ENCODE measurements at regions of chr7 and their contacts with region 1.

Region 1: GRCh38 chr7:107501593-107501992 is 31.7 kb downstream of the GPR22 start:
- DNase-seq: peak; percentile 47 to 76 (median 62)
- ATAC-seq: peak; percentile 92
- H3K4me3 ChIP-seq: no peak overlapping the region
- H3K27ac ChIP-seq: no peak overlapping the region
- H3K4me1 ChIP-seq: peaks cover 2 to 3% of the 10 kb centered on the region in 2 experiments; a peak in 2 of 5 replicates
- H3K27me3 ChIP-seq: no peaks in the 10 kb centered on the region
- CTCF ChIP-seq: peak; percentile 63 to 96 (median 84); a peak in 5 of 6 replicates
- EP300 ChIP-seq: no peak
- POLR2A ChIP-seq: no peak
- RAD21 ChIP-seq: peak; percentile 89 to 92

Region 2: DNA sequence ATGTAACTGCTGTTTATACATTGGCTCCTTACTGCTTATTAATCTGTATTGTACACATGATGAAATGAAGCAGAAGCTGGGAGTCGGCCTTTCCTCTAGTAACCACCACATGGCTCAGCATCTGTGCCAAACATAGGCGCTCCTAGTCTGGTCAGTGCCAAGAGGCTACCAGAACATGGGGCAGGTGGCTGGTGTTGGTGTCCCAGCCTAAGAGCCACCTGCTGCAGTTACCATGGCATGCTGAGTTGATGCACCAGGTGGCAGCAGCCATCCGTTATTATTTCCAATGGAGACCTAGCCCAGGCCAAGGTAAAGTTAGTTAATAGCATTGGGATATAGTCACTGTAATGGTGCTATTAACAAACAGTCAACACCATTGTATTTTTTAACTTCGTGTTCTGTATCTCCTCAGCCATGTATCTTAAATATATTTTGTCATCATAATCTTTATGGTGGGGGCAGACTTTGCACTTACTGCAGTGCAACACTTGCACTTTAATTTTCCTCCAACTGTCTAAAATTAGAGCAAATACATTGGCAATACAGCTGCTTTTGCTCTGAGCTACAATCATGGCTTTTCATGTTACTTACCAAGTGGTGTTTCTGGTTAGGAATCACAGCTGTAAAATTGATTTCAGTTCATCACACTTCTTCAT is 299.7 kb before region 1 on chr7:
- CTCF ChIA-PET with region 1: interaction called, 12 read pairs
- POLR2A ChIA-PET with region 1: no interaction called
- in situ Hi-C with region 1: no loop called
- intact Hi-C with region 1: loop called (anchors 1 kb)
- DNase-seq: peak; percentile 59 to 68 (median 64)
- ATAC-seq: peak; percentile 90
- H3K4me3 ChIP-seq: no peak overlapping the region
- H3K27ac ChIP-seq: no peak overlapping the region
- H3K4me1 ChIP-seq: peaks cover 0 to 5% of the 10 kb centered on the region in 2 experiments; a peak in 1 of 5 replicates
- H3K27me3 ChIP-seq: no peaks in the 10 kb centered on the region
- CTCF ChIP-seq: peak; percentile 77 to 84 (median 80)
- EP300 ChIP-seq: no peak
- POLR2A ChIP-seq: no peak
- RAD21 ChIP-seq: peak; percentile 73 to 80

Region 3: GRCh38 chr7:107318523-107319160 is 183.0 kb before region 1 on chr7:
- CTCF ChIA-PET with region 1: no interaction called
- POLR2A ChIA-PET with region 1: no interaction called
- in situ Hi-C with region 1: no loop called
- intact Hi-C with region 1: loop called (anchors 5 kb)
- DNase-seq: peak; percentile 66 to 92 (median 75)
- ATAC-seq: peak; percentile 97
- H3K4me3 ChIP-seq: no peak overlapping the region
- H3K27ac ChIP-seq: peak overlapping the region; percentile 62
- H3K4me1 ChIP-seq: peaks cover 13 to 30% of the 10 kb centered on the region in 2 experiments
- H3K27me3 ChIP-seq: no peaks in the 10 kb centered on the region
- CTCF ChIP-seq: no peak
- EP300 ChIP-seq: peak; percentile 89
- POLR2A ChIP-seq: 0 out of 2 replicates have a peak, but pooled peaks have one; percentile 29
- RAD21 ChIP-seq: no peak

Region 4: GRCh38 chr7:107387128-107387527 is 114.5 kb before region 1 on chr7:
- CTCF ChIA-PET with region 1: no interaction called
- POLR2A ChIA-PET with region 1: no interaction called
- in situ Hi-C with region 1: no loop called
- intact Hi-C with region 1: loop called (anchors 5 kb)
- DNase-seq: peak in 2 of 4 experiments; percentile 41 to 67
- ATAC-seq: peak; percentile 92
- H3K4me3 ChIP-seq: no peak overlapping the region
- H3K27ac ChIP-seq: peak overlapping the region; percentile 59; the same call in 1 of the 3 replicates
- H3K4me1 ChIP-seq: peaks cover 5 to 17% of the 10 kb centered on the region in 2 experiments
- H3K27me3 ChIP-seq: no peaks in the 10 kb centered on the region
- CTCF ChIP-seq: 0 out of 6 replicates have a peak, but pooled peaks of 1 of the 3 experiments have one; percentile 23
- EP300 ChIP-seq: no peak
- POLR2A ChIP-seq: no peak
- RAD21 ChIP-seq: no peak

Region 5: DNA sequence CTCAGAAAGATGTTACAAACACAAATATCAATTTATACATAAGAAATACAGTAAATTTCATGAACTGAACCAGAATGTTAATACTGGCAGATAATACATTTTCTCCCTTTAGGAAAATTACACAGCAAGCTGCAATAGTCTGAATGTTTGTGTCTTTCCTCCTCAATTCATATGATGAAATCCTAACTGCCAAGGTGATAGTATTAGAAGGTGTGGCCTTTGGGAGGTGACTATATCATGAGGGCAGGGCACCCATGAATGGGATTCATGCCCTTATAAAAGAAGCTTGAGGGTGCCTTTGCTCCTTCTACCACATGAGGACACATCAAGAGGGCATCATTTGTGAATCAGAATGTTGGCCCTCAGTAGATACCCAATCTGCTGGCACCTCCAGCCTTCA is 96.0 kb before region 1 on chr7:
- CTCF ChIA-PET with region 1: no interaction called
- POLR2A ChIA-PET with region 1: no interaction called
- in situ Hi-C with region 1: no loop called
- intact Hi-C with region 1: no loop called
- DNase-seq: no peak
- ATAC-seq: peak; percentile 50
- H3K4me3 ChIP-seq: no peak overlapping the region
- H3K27ac ChIP-seq: peak overlapping the region; percentile 13; the same call in 1 of the 3 replicates
- H3K4me1 ChIP-seq: no peaks in the 10 kb centered on the region
- H3K27me3 ChIP-seq: no peaks in the 10 kb centered on the region
- CTCF ChIP-seq: no peak
- EP300 ChIP-seq: no peak
- POLR2A ChIP-seq: no peak
- RAD21 ChIP-seq: no peak

Region 6: DNA sequence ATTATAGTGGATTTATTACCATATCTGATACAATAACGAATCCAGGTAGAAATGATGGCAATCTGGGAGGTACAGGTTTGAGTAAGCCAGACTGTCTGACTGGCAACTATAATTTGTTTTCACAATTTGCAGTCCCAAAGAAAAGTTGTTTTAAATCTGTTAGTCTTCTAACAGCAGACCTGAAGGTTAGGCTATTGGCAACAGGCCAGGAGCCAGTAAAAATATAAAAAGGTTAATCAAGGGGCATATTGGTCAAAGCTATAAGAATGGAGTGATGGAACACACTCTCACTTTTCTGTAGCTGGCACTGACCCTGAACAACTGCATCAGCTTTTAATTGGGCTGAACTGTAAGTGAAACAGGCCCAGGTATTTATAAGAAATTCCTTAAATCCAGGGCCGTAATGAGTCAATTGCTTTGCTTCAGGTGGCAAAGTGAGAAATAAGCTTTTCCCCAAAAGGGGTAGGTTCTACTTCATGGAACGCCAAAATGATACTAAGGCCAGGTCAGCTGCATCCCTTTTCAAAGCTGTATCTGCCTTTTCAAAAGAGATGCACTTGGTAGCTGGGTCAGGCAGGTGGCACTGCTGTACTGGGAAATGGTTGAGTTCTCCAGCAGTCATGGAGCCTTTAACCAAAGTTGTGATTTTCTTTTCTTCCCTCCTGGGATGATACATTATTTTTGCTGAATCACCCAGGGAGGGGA is 38.7 kb before region 1 on chr7:
- CTCF ChIA-PET with region 1: interaction called, 4 read pairs
- POLR2A ChIA-PET with region 1: interaction called, 6 read pairs
- in situ Hi-C with region 1: no loop called
- intact Hi-C with region 1: loop called (anchors 1 kb)
- DNase-seq: peak; percentile 20 to 77 (median 38)
- ATAC-seq: peak; percentile 92
- H3K4me3 ChIP-seq: no peak overlapping the region
- H3K27ac ChIP-seq: no peak overlapping the region
- H3K4me1 ChIP-seq: no peaks in the 10 kb centered on the region
- H3K27me3 ChIP-seq: no peaks in the 10 kb centered on the region
- CTCF ChIP-seq: peak; percentile 77 to 97 (median 82)
- EP300 ChIP-seq: 0 out of 2 replicates have a peak, but pooled peaks have one; percentile 24
- POLR2A ChIP-seq: no peak
- RAD21 ChIP-seq: peak; percentile 94 to 97

Region 7: GRCh38 chr7:107725151-107725740 is 223.7 kb after region 1 on chr7:
- CTCF ChIA-PET with region 1: no interaction called
- POLR2A ChIA-PET with region 1: no interaction called
- in situ Hi-C with region 1: no loop called
- intact Hi-C with region 1: no loop called
- DNase-seq: peak; percentile 63 to 83 (median 70)
- ATAC-seq: peak; percentile 75
- H3K4me3 ChIP-seq: no peak overlapping the region
- H3K27ac ChIP-seq: no peak overlapping the region
- H3K4me1 ChIP-seq: peaks cover 0 to 6% of the 10 kb centered on the region in 2 experiments; a peak in 1 of 5 replicates
- H3K27me3 ChIP-seq: no peaks in the 10 kb centered on the region
- CTCF ChIP-seq: peak; percentile 56 to 91 (median 79); a peak in 5 of 6 replicates
- EP300 ChIP-seq: no peak
- POLR2A ChIP-seq: no peak
- RAD21 ChIP-seq: peak; percentile 94 to 95

Measured in K562 (cell line).